Right cardiac atrium (tissue), 5 donors: ENCODE measurements at regions of chr17 and their contacts with region 1.

Region 1: GRCh38 chr17:64345696-64346376 is 44.8 kb downstream of the PECAM1 start:
- DNase-seq: peak in 2 of 3 donors; percentile 60
- ATAC-seq: peak; percentile 34 to 45
- H3K4me3 ChIP-seq: no peak overlapping the region
- H3K27ac ChIP-seq: peak overlapping the region; percentile 34
- H3K4me1 ChIP-seq: peaks cover 13% of the 10 kb centered on the region
- H3K27me3 ChIP-seq: no peaks in the 10 kb centered on the region

Region 2: DNA sequence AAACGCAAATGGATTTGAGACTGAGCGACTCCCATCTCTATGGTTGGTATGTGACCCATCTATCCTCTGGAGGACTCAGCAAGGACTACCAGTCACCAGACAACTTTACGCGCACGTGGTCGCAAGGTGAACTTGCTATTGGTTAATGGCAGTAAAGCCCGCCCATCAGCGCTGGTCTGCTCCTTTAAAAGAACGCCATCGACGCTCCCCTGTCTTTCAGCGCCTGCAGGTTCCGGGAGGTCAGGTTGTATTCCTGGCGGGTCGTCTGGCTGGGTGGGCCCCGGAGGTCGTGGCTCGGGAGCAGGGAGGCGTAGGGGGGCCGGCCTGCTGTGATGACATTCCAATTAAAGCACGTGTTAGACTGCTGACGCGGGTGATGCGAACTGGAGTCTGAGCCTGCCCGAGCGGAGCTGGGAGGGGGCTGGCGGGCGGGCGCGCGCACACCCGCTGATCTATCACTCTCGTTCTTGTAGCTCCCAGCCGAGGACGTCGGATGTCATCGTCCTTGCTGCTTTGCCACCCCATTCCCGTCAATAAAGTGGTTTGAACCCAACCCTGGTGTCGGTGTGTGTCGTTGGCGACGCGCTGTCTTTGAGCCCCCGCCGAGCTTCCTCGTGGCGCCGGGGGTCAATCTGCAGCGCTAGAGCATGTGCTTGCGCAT is 199.9 kb before region 1 on chr17:
- intact Hi-C with region 1: no loop called
- DNase-seq: peak; percentile 97 to 98 (median 98)
- ATAC-seq: peak; percentile 97
- H3K4me3 ChIP-seq: peak overlapping the region; percentile 62
- H3K27ac ChIP-seq: peak overlapping the region; percentile 93
- H3K4me1 ChIP-seq: peaks cover 11% of the 10 kb centered on the region
- H3K27me3 ChIP-seq: no peaks in the 10 kb centered on the region

Region 3: GRCh38 chr17:64291254-64291851 is 54.5 kb before region 1 on chr17:
- intact Hi-C with region 1: no loop called
- DNase-seq: no peak
- ATAC-seq: no peak
- H3K4me3 ChIP-seq: no peak overlapping the region
- H3K27ac ChIP-seq: no peak overlapping the region
- H3K4me1 ChIP-seq: no peaks in the 10 kb centered on the region
- H3K27me3 ChIP-seq: no peaks in the 10 kb centered on the region

Region 4: GRCh38 chr17:64385187-64386083 is 39.6 kb after region 1 on chr17:
- intact Hi-C with region 1: loop called in 1 of 4 experiments (anchors 5 kb)
- DNase-seq: peak; percentile 68 to 79 (median 78)
- ATAC-seq: peak; percentile 70 to 84
- H3K4me3 ChIP-seq: peak overlapping the region; percentile 18
- H3K27ac ChIP-seq: peak overlapping the region; percentile 49
- H3K4me1 ChIP-seq: peaks cover 17% of the 10 kb centered on the region
- H3K27me3 ChIP-seq: no peaks in the 10 kb centered on the region